ENCODE measurements at regions of chr7 and their contacts with region 1.

Region 1: DNA sequence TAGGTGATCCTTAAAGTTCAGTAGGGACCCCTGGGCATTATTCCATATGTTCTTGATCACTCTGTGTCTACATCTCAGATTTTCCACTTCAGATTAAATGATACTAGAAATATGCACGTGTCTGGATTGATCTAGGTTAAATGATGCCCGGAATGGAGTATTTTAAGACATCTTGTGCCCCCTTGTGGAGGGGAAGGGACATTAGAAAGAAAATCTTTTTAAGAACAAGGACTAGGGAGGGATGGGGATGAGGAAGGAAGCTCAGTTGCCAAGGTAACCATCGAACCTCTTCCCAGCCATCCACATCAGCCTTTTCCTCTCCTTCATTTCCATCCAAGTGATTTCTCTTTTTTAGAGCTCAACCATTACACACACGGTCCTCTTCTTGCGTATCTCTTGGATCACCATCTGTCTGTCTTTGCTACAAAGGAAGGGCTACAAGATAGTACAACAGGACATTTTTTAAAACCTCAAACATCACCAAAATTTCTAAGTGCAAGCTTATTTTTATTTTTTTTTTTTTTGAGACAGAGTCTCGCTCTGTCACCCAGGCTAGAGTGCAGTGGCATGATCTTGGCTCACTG is 40.5 kb downstream of the PRSS2 start:
- DNase-seq: peak; percentile 71
- ATAC-seq: no peak
- H3K4me3 Mint-ChIP-seq: peak overlapping the region; percentile 54
- H3K27ac Mint-ChIP-seq: peak overlapping the region; percentile 88
- H3K4me1 Mint-ChIP-seq: peaks cover 72% of the 10 kb centered on the region
- H3K27me3 Mint-ChIP-seq: peaks cover 2% of the 10 kb centered on the region

Region 2: DNA sequence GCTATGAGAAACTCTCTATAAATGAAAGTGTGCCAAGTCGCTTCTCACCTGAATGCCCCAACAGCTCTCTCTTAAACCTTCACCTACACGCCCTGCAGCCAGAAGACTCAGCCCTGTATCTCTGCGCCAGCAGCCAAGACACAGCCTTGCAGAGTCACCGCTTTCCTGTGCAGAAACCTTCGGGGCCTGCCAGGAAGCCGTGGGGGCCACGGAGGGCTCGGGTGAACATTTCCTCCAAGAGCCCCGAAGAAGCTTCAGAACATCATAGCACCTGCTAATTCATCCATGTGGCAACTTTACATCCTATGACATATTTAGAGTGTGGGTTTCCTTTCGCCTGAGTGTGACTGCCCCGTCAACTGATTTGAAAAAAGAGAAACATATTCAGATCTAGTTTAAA is 497.7 kb before region 1 on chr7:
- CTCF ChIA-PET with region 1: interaction called, 6 read pairs
- POLR2A ChIA-PET with region 1: interaction called, 12 read pairs
- DNase-seq: peak; percentile 45
- ATAC-seq: peak; percentile 77
- H3K4me3 Mint-ChIP-seq: peak overlapping the region; percentile 10
- H3K27ac Mint-ChIP-seq: no peak overlapping the region
- H3K4me1 Mint-ChIP-seq: peaks cover 11% of the 10 kb centered on the region
- H3K27me3 Mint-ChIP-seq: peaks cover 32% of the 10 kb centered on the region

Region 3: GRCh38 chr7:142535123-142535779 is 276.0 kb before region 1 on chr7:
- CTCF ChIA-PET with region 1: interaction called, 21 read pairs
- POLR2A ChIA-PET with region 1: interaction called, 16 read pairs
- DNase-seq: peak; percentile 82
- ATAC-seq: peak; percentile 95
- H3K4me3 Mint-ChIP-seq: peak overlapping the region; percentile 52
- H3K27ac Mint-ChIP-seq: peak overlapping the region; percentile 70
- H3K4me1 Mint-ChIP-seq: peaks cover 29% of the 10 kb centered on the region
- H3K27me3 Mint-ChIP-seq: peaks cover 2% of the 10 kb centered on the region

Region 4: DNA sequence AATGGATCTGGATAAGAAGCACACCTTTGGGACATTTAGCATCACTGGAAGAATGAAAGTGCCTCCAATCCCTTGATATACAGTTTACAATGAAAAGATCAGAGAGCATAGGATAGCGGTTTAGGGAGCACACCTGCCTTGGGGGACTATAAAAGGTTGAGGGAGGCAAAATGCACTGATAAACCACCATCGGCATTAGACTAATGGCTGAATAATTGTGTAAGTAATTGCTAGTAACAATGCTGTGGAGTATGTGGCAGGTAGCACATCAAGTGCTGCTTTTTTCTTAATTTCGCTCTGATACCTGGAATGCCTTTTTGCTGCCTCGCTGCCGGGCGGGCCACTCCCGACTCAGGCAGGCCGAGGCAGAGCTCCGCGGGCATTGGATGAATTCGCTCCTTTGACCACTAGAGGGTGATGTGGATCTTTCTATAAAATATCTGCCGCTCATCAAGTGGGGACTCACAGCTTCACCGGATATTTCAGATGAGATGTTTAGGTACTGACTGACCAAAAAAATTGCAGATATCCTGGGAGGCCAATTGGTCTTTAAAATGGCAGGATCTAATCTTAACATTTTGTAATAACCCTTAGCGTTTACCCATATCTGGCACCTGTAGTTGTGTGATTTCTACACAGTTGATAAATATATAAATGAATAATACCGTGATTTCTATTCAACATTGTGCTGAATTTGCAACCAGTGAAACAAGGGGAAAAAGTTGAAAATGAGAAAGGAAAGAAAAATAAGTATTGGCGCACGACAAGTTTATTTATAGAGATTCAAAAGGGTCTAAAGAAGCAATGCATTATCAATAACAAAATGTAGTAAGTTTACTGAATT is 178.7 kb before region 1 on chr7:
- CTCF ChIA-PET with region 1: interaction called, 92 read pairs
- POLR2A ChIA-PET with region 1: interaction called, 20 read pairs
- DNase-seq: peak; percentile 71
- ATAC-seq: peak; percentile 81
- H3K4me3 Mint-ChIP-seq: no peak overlapping the region
- H3K27ac Mint-ChIP-seq: no peak overlapping the region
- H3K4me1 Mint-ChIP-seq: peaks cover 18% of the 10 kb centered on the region
- H3K27me3 Mint-ChIP-seq: peaks cover 13% of the 10 kb centered on the region

Region 5: GRCh38 chr7:142827951-142828500 is 16.8 kb after region 1 on chr7:
- CTCF ChIA-PET with region 1: interaction called, 10 read pairs
- POLR2A ChIA-PET with region 1: no interaction called
- DNase-seq: no peak
- ATAC-seq: no peak
- H3K4me3 Mint-ChIP-seq: no peak overlapping the region
- H3K27ac Mint-ChIP-seq: no peak overlapping the region
- H3K4me1 Mint-ChIP-seq: no peaks in the 10 kb centered on the region
- H3K27me3 Mint-ChIP-seq: peaks cover 20% of the 10 kb centered on the region

Region 6: DNA sequence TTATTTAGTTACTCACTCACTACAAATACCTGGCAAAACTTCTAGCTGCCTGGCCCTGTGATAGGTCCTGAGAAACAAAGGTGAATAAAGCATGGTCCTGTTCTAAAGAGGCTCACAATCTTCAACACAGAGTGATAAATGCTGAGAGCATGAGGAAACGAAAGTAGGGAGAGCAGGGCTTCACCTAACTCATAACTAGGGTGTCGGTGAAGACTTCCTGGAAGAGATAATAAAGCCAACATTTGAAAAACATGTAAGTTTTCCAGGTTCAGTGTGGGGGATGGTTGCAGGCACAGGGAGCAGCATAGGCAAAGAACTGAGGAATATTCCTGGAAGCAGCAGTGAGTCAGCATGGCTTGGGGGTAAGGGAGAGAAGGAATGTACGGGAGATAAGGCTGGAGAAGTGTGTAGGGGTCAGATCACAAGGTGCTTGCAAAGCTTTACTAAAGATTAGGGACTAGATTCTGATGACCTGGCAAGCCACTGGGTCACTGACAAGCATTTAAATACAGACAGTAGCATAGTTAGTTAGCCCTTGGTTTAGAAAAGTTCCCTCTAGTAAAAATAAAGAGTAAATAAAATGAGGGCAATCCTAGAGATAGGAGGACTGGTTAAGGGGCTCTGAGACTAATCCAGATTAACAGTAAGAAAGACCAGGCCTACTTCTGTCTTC is 145.8 kb after region 1 on chr7:
- CTCF ChIA-PET with region 1: no interaction called
- POLR2A ChIA-PET with region 1: no interaction called
- DNase-seq: no peak
- ATAC-seq: no peak
- H3K4me3 Mint-ChIP-seq: no peak overlapping the region
- H3K27ac Mint-ChIP-seq: no peak overlapping the region
- H3K4me1 Mint-ChIP-seq: no peaks in the 10 kb centered on the region
- H3K27me3 Mint-ChIP-seq: peaks cover 19% of the 10 kb centered on the region

Region 7: DNA sequence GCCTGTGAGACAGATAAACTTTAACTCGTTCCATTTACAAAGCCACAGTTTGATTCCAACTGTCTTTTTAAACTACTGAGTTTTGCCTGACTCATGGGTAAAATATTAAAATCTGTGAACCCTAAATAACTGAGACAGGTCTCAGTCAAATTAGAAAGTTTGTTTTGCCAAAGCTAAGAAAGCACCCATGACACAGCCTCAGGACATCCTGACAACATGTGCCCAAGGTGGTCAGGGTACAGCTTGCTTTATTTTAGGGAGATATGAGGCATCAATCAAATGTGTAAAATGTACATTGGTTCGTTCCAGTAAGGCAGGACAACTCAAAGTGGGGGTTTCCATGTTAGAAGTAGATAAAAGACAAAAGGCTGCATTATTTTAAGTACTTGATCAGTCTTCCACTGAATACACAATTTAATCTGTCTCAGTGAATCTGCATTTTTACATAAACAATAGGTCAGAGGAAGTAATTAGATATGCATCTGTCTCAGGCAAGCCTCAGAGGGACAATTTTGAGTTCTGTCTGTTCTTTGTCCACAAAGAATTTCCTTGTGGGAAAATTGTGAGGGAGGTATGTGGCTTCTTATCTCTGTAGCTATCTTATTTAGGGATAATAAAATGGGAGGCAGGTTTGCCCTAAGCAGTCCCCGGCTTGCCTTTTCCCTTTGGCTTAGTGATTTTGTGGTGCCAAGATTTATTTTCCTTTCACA is 309.6 kb after region 1 on chr7:
- CTCF ChIA-PET with region 1: no interaction called
- POLR2A ChIA-PET with region 1: no interaction called
- DNase-seq: no peak
- ATAC-seq: no peak
- H3K4me3 Mint-ChIP-seq: no peak overlapping the region
- H3K27ac Mint-ChIP-seq: no peak overlapping the region
- H3K4me1 Mint-ChIP-seq: no peaks in the 10 kb centered on the region
- H3K27me3 Mint-ChIP-seq: no peaks in the 10 kb centered on the region

Region 8: DNA sequence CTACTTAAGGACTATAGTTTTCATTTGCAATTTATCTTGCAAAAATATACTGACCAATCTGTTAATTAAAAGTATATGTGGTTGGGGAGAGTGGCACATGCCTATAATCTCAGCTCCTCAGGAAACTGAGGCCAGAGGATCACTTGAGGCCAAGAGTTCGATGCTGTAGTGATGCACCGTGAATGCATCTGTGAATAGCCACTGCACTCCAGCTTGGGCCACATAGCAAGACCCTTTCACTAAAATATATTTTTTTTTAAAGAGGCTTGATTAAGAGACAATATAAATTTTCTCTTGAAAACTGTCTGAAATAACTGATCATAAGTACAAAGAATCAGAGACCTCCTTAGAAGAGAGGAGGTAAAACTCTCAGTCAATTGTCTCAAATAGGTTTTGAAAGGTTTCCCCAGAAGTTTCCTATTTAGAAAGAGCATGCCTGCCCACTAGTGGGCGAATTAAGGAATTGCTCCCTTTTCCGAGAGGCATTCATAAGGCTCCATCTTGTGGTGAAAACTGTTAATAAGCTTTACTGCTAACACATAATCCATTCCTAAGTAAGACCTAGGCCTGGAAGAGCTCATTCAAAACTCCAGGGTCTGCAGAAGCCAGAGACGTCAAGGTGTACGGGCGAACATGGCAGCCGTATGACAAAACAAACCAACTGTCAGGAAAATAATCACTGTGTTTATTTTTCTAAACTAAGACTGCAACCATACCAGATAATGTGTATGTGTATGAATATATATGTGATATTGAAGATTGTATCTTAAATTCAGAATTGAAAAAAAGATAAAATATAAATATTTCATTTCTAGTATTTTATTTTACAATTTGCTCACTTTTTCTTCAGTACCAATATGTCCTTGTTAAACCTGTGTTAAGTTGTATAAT is 403.8 kb after region 1 on chr7:
- CTCF ChIA-PET with region 1: interaction called, 12 read pairs
- POLR2A ChIA-PET with region 1: no interaction called
- DNase-seq: peak; percentile 79
- ATAC-seq: peak; percentile 85
- H3K4me3 Mint-ChIP-seq: no peak overlapping the region
- H3K27ac Mint-ChIP-seq: no peak overlapping the region
- H3K4me1 Mint-ChIP-seq: no peaks in the 10 kb centered on the region
- H3K27me3 Mint-ChIP-seq: peaks cover 6% of the 10 kb centered on the region